ENCODE measurements at regions of chr7 and their contacts with region 1.

Region 1: DNA sequence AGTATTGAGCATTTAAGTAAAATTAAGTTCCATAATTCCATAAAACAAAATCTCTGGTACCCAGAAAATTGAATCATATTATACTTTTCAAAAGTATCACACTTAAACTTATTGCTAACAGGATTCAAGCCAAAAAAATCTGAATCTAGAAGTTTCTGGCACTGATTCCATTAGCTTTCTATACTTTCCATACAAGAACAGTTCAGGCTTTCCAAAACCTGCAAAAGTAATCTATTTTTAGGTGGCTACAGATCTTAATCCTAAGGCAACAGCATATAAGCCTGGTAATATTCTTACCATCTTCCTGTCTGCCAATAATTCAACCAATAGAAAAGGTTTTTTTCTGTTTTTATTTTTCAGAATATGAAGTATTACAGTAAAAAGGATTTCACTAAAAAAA is 185.0 kb downstream of the CRPPA start:
- DNase-seq: no peak
- H3K4me3 ChIP-seq: no peak overlapping the region
- H3K27ac ChIP-seq: no peak overlapping the region
- H3K4me1 ChIP-seq: peaks cover 6% of the 10 kb centered on the region; the same call in 1 of the 2 replicates
- H3K27me3 ChIP-seq: no peaks in the 10 kb centered on the region
- CTCF ChIP-seq: no peak

Region 2: GRCh38 chr7:14902589-14903067 is 1333.8 kb before region 1 on chr7 and contains the start of gene DGKB:
- CTCF ChIA-PET with region 1: no interaction called
- POLR2A ChIA-PET with region 1: no interaction called
- intact Hi-C with region 1: no loop called
- DNase-seq: no peak
- H3K4me3 ChIP-seq: no peak within 1 kb of the TSS
- H3K27ac ChIP-seq: no peak within 1 kb of the TSS
- H3K4me1 ChIP-seq: no peaks in the 10 kb centered on the region
- H3K27me3 ChIP-seq: no peaks in the 10 kb centered on the region
- CTCF ChIP-seq: no peak
- total RNA-seq, gene DGKB: 0.23 and 0.48 TPM in 2 replicates

Region 3: GRCh38 chr7:15954671-15955354 is 281.6 kb before region 1 on chr7:
- CTCF ChIA-PET with region 1: no interaction called
- POLR2A ChIA-PET with region 1: no interaction called
- intact Hi-C with region 1: no loop called
- DNase-seq: no peak
- H3K4me3 ChIP-seq: no peak overlapping the region
- H3K27ac ChIP-seq: no peak overlapping the region
- H3K4me1 ChIP-seq: no peaks in the 10 kb centered on the region
- H3K27me3 ChIP-seq: no peaks in the 10 kb centered on the region
- CTCF ChIP-seq: no peak

Region 4: DNA sequence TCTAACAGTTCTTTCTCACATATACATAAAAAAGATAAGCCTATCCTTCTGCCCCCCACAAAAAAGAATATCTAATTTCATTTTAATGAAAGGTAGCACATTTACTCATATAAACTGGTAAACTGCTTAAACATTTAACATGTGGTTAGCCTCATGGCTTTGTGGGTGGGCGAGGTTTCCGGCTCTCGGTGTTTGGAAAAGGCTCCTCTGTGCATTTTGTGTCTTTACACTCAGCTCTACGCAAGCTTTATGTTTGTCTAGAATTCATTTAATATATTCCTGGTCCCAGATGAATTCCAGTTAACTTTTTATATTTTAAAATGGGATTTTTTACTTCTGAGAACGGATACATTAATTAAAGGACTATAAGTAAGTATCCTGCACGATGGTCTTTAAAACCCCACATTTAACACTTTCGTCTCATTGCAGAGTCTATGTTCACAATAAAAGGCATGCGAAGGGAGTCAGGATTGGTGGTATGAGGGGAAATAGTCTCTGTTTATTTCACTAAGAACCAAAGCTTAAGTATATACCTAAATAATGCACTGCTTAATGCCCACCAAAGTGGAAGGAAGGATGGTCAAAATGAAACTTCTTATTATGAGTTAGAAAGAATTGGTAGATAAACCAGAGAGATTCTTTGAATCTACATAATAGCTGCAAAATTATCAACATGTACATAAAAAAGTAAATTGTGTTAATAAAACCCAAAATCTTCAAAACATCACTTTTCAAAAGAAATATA is 12.2 kb before region 1 on chr7:
- CTCF ChIA-PET with region 1: no interaction called
- POLR2A ChIA-PET with region 1: interaction called, 10 read pairs
- intact Hi-C with region 1: no loop called
- DNase-seq: no peak
- H3K4me3 ChIP-seq: no peak overlapping the region
- H3K27ac ChIP-seq: no peak overlapping the region
- H3K4me1 ChIP-seq: no peaks in the 10 kb centered on the region
- H3K27me3 ChIP-seq: no peaks in the 10 kb centered on the region
- CTCF ChIP-seq: no peak

Region 5: GRCh38 chr7:16338065-16338464 is 101.7 kb after region 1 on chr7:
- CTCF ChIA-PET with region 1: no interaction called
- POLR2A ChIA-PET with region 1: no interaction called
- intact Hi-C with region 1: no loop called
- DNase-seq: no peak
- H3K4me3 ChIP-seq: no peak overlapping the region
- H3K27ac ChIP-seq: no peak overlapping the region
- H3K4me1 ChIP-seq: no peaks in the 10 kb centered on the region
- H3K27me3 ChIP-seq: no peaks in the 10 kb centered on the region
- CTCF ChIP-seq: no peak

Measured in PC-9 (cell line).